Activated CD4-positive, alpha-beta T cell treated with anti-CD3 and anti-CD28 coated beads for 36 hours (primary cell): ENCODE measurements at regions of chr5 and their contacts with region 1.

Region 1: GRCh38 chr5:111092062-111092853 is at the start of gene WDR36:
- DNase-seq: peak; percentile 93
- ATAC-seq: peak; percentile 91
- H3K4me3 Mint-ChIP-seq: peak within 1 kb of the TSS; percentile 92
- H3K27ac Mint-ChIP-seq: peak within 1 kb of the TSS; percentile 96
- H3K4me1 Mint-ChIP-seq: peaks cover 31% of the 10 kb centered on the region
- H3K27me3 Mint-ChIP-seq: peaks cover 4% of the 10 kb centered on the region
- total RNA-seq, gene WDR36: 58.6 to 61.7 TPM

Region 2: GRCh38 chr5:110738812-110739651 is 353.2 kb before region 1 on chr5 and contains the start of gene SLC25A46:
- CTCF ChIA-PET with region 1: interaction called, 3 read pairs
- POLR2A ChIA-PET with region 1: no interaction called
- intact Hi-C with region 1: loop called (anchors 1 kb)
- DNase-seq: peak; percentile 92
- ATAC-seq: peak; percentile 89
- H3K4me3 Mint-ChIP-seq: peak within 1 kb of the TSS; percentile 87
- H3K27ac Mint-ChIP-seq: peak within 1 kb of the TSS; percentile 91
- H3K4me1 Mint-ChIP-seq: peaks cover 17% of the 10 kb centered on the region
- H3K27me3 Mint-ChIP-seq: peaks cover 4% of the 10 kb centered on the region
- total RNA-seq, gene SLC25A46: 32.3 to 35.3 TPM

Region 3: DNA sequence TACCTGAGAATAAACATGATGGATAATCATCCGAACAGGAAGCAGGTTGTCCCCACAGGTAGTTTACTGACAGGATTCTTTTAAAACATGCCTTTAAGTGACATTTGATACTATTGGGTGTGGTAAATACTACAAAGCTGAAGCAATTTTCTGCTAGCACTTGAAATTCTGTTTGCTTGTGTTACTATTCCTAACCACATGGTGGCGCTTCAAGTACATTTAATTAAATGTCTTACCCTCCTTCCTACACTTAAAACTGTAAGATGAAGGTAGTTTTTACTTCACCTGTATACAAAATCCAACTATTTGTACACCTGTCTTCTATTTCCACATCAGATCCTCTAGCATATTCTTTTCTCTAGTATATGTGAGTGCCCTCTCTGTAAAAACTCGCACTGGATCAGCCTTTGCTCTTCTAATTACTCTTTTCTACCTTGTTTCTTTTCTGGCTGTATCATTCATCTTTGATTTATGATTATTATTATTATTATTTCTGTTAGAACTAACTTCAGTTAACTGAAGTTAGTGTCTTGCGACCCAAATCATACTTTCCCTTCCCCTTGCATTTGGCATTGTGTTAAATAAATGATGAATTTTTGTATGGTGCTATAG is 335.0 kb before region 1 on chr5:
- CTCF ChIA-PET with region 1: interaction called, 3 read pairs
- POLR2A ChIA-PET with region 1: no interaction called
- intact Hi-C with region 1: loop called (anchors 2 to 5 kb)
- DNase-seq: peak; percentile 17
- ATAC-seq: no peak
- H3K4me3 Mint-ChIP-seq: no peak overlapping the region
- H3K27ac Mint-ChIP-seq: no peak overlapping the region
- H3K4me1 Mint-ChIP-seq: peaks cover 27% of the 10 kb centered on the region
- H3K27me3 Mint-ChIP-seq: no peaks in the 10 kb centered on the region

Region 4: GRCh38 chr5:111116550-111116949 is 24.3 kb after region 1 on chr5:
- CTCF ChIA-PET with region 1: interaction called, 4 read pairs
- POLR2A ChIA-PET with region 1: interaction called, 16 read pairs
- intact Hi-C with region 1: no loop called
- DNase-seq: no peak
- ATAC-seq: no peak
- H3K4me3 Mint-ChIP-seq: no peak overlapping the region
- H3K27ac Mint-ChIP-seq: no peak overlapping the region
- H3K4me1 Mint-ChIP-seq: peaks cover 23% of the 10 kb centered on the region
- H3K27me3 Mint-ChIP-seq: no peaks in the 10 kb centered on the region

Region 5: DNA sequence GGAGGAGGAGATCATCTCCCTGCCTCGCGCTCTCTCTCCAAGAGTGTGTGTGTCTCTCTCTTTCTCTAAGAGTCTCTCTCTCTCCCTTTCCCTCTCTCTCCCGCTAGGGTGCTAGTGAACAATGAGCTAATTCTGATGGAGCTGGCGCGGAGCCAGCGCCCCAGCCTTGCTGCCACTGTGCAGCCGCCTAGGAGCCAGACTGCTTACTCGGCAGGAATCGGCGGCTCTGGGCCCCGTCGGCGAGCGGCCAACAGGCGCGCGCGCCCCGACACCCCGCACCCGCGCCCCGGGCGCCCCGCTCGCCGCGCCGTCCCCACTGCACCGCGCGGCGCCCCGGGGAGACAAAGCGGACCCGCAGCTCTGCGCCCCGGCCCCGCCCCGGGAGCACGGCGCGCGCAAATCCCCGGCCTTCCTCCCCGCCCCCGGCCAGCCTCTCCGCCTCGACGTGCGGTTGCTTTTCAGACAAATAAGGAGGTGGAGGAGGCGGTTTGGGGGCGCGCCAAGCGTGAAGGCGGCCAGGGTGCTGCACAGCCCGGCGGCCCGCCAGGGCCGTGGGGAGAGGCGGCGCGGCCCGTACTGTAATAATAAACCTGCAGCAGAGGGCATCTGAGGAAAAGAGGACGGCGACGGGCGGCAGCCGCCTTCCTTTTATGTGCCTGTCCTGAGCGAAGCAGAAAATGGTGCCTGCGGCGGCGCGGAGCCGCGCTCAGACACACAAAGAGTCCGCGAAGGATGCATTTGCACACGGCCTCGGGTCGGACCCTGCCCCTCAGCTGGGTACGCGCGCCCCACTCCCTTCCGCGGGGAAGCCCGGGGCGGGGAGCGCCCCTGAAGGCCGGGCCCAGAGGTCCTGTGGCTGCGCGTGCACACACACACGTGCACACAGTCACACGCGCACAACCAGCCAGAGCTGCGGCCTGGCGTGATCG is 665.4 kb after region 1 on chr5:
- CTCF ChIA-PET with region 1: no interaction called
- POLR2A ChIA-PET with region 1: no interaction called
- intact Hi-C with region 1: loop called in 1 of 2 experiments (anchors 2 kb)
- DNase-seq: peak; percentile 91
- ATAC-seq: peak; percentile 78
- H3K4me3 Mint-ChIP-seq: peak overlapping the region; percentile 80
- H3K27ac Mint-ChIP-seq: peak overlapping the region; percentile 86
- H3K4me1 Mint-ChIP-seq: peaks cover 18% of the 10 kb centered on the region
- H3K27me3 Mint-ChIP-seq: peaks cover 3% of the 10 kb centered on the region

Region 6: DNA sequence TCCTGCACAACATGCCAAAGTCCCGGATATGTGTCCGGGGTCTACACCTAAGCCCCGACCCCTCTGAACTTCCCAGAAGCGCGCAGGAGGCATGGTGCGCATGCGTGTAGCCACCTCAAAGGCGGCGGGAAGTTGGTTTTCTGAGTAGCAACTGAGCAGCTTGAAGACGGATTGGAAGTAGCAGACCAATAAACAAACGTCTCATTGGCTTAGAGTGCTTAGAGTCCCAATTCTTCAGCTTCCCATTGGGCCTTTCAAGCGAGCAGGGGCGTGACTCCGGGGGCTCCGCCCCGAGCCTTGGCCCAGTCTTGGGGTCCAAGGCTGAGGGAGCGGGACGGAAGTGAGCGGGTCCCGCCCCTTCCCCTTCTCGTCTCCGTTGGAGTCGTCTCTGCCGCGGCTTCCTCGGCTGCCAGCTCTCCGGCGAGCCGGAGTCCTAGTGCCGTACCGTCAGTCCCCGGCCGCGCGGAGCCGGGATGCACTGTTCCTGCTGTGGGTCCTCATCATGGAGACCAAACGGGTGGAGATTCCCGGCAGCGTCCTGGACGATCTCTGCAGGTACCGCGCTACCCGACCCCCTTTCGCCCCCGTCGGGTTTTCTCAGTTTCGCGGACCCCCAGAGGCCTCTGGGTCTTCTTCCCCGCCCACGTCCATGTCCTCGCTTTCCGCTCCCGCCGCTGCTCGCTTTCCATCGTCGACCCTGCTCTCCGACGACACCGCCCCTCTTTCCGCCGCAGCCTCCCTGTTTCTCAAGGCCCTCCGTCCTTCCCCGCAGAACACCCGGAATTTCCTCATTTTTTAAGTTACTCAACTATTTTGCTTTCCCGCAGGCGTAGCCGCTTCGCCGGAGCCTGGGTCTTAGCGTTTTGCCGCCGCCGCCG is 1884.4 kb after region 1 on chr5 and contains the start of gene DCP2:
- CTCF ChIA-PET with region 1: no interaction called
- POLR2A ChIA-PET with region 1: no interaction called
- intact Hi-C with region 1: loop called in 1 of 2 experiments (anchors 5 kb)
- DNase-seq: peak; percentile 96
- ATAC-seq: peak; percentile 94
- H3K4me3 Mint-ChIP-seq: peak within 1 kb of the TSS; percentile 99
- H3K27ac Mint-ChIP-seq: peak within 1 kb of the TSS; percentile 98
- H3K4me1 Mint-ChIP-seq: peaks cover 39% of the 10 kb centered on the region
- H3K27me3 Mint-ChIP-seq: no peaks in the 10 kb centered on the region
- total RNA-seq, gene DCP2: 94.0 to 101 TPM